ENCODE measurements at regions of chr7 and their contacts with region 1.

Region 1: DNA sequence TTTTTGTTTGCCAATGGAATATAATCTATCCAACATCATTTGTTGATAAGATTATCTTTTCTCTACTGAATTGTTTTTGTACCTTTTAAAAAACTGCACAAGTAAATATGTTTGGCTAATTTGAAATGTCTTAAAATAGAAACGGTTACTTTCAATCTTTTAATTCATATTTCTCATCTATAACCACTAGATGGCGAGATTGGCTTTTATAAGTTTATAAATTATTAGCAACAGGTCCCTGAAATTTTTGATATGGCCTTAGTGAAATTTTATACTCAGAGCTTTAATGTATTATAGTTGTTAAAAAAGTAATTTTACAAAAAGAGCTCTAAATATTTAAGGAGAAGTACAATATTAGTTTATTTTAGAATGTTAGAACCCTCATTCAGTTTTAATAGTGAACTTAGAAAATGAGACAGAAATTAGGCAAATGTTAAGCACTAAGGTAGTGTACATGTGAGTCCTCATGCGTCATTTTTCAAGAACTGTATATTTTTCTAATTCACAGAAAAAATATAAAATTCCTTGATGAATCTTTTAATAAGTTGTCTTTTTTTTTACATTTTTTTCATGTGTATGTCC is 592.5 kb downstream of the ARL4A start:
- DNase-seq: no peak
- ATAC-seq: peak in 1 of 4 donors; percentile 43
- H3K4me3 ChIP-seq: no peak overlapping the region
- H3K27ac ChIP-seq: no peak overlapping the region
- H3K4me1 ChIP-seq: no peaks in the 10 kb centered on the region
- H3K27me3 ChIP-seq: no peaks in the 10 kb centered on the region
- CTCF ChIP-seq: peak; percentile 64

Region 2: DNA sequence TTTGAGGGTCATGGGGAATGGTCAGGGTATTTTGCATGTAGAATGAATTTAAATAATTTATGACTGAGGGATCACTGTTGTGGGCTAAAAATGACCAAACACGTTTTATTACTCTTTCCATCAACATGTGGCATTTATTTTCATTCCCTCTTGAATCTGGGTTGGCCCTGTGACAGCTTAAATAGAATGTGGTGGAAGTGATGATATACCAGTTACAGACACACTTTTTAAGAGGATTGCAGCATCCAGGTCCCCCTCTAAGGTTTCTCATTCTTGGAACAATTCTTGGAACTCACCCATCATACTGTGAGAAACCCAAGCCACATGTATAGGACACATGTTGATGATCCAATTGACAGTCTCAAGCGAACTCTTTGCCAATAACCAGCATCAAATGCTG is 437.1 kb after region 1 on chr7:
- intact Hi-C with region 1: no loop called
- DNase-seq: no peak
- ATAC-seq: no peak
- H3K4me3 ChIP-seq: no peak overlapping the region
- H3K27ac ChIP-seq: no peak overlapping the region
- H3K4me1 ChIP-seq: no peaks in the 10 kb centered on the region
- H3K27me3 ChIP-seq: no peaks in the 10 kb centered on the region
- CTCF ChIP-seq: no peak

Region 3: DNA sequence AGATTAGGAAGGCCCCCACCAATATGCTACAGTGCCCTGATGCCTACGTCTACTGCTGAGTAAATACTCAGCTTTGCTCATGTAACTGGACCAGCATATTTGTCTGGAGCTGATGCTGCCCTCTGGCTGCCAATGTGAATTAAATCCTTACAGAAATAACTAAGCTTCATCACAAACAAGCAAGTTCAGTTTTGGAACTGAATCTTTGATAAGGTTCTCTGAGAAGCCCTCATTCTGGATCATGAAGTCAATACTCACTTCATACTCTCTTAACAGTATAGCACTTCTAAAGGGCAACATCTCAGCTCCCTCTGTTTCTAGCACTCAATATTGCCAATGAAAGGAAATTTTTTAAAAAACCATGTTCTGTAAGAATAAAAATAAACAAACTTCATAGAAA is 462.9 kb after region 1 on chr7:
- intact Hi-C with region 1: loop called in 1 of 2 experiments (anchors 2 kb)
- DNase-seq: no peak
- ATAC-seq: peak in 2 of 4 donors; percentile 60 to 85
- H3K4me3 ChIP-seq: no peak overlapping the region
- H3K27ac ChIP-seq: no peak overlapping the region
- H3K4me1 ChIP-seq: peaks cover 16% of the 10 kb centered on the region
- H3K27me3 ChIP-seq: no peaks in the 10 kb centered on the region
- CTCF ChIP-seq: peak; percentile 55

Region 4: GRCh38 chr7:14457568-14458453 is 1177.9 kb after region 1 on chr7:
- intact Hi-C with region 1: loop called (anchors 2 to 5 kb)
- DNase-seq: peak; percentile 32 to 65
- ATAC-seq: peak; percentile 46 to 76 (median 74)
- H3K4me3 ChIP-seq: no peak overlapping the region
- H3K27ac ChIP-seq: no peak overlapping the region
- H3K4me1 ChIP-seq: no peaks in the 10 kb centered on the region
- H3K27me3 ChIP-seq: no peaks in the 10 kb centered on the region
- CTCF ChIP-seq: peak; percentile 87

Region 5: DNA sequence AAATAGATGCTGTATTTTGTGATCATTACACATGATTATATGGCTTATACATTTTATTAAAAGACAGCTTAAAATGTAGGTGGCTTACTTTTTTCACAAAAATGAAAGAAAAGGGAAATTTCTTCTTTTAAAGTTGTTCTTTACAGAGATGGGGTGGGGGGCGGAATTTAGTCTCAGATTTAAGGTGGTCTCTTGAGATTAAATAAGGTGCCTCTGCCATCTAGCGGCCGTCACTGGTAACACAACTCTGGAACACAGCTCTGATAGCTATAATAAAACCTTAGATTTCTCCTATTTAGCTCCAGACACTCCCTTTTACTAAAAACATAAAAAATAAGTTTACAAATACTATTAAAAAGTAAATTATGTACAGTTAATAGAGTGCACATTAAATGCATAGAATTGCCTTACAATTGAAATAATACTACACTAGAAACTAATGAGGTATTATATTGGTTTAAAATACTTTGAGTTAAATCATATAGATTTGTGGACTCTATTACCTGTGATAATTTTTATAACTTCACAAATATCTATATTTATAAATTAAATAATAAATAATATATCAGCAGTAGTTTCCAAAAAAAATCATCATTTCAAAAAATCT is 1411.8 kb after region 1 on chr7:
- intact Hi-C with region 1: loop called (anchors 5 to 10 kb)
- DNase-seq: peak; percentile 39 to 64
- ATAC-seq: no peak
- H3K4me3 ChIP-seq: no peak overlapping the region
- H3K27ac ChIP-seq: no peak overlapping the region
- H3K4me1 ChIP-seq: no peaks in the 10 kb centered on the region
- H3K27me3 ChIP-seq: no peaks in the 10 kb centered on the region
- CTCF ChIP-seq: peak; percentile 83

Measured in psoas muscle (tissue), 8 donors.